ENCODE measurements at regions of chr12 and their contacts with region 1.

Region 1: DNA sequence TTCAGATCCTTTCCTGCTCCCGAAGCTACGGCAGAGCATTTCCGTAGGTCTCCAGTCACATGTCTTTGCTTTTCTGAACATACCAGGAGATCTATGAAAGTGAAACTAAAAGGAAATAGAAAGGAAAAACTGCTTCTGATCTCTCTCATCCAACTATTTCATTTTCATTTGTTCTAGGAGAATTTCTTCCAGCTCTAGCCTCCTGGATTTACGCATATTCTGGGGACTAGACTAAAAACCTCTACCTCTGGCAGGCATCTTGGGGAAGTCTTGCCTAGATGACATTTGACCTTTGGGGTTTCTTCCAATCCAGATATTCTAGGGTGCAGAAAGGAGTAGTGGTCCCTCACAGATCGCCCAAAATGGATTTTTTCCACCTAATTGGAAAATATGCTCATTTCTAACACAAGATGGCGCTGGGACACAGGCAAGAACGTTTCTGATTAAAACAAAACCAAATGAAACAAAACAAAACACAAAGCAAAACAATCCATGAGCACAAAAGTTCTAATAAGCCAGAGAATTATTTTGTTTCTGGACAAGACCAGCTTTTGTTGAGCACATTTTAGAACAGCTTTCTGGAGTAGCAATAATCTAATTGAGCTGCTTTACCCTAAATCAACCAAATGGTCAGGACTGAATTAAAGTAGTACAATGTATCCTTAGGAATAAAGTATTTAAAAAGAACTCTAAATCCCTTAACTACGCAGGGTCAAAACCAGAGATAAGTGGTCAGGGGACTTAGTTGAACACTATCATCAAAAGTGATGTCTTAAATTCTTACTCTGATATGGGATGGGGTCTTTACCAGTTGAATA is 12.3 kb upstream of the PARP11 start:
- DNase-seq: no peak
- ATAC-seq: peak; percentile 42
- H3K4me3 Mint-ChIP-seq: no peak overlapping the region
- H3K27ac Mint-ChIP-seq: no peak overlapping the region
- H3K4me1 Mint-ChIP-seq: peaks cover 4% of the 10 kb centered on the region
- H3K27me3 Mint-ChIP-seq: peaks cover 10% of the 10 kb centered on the region
- CTCF ChIP-seq: peak; percentile 26

Region 2: DNA sequence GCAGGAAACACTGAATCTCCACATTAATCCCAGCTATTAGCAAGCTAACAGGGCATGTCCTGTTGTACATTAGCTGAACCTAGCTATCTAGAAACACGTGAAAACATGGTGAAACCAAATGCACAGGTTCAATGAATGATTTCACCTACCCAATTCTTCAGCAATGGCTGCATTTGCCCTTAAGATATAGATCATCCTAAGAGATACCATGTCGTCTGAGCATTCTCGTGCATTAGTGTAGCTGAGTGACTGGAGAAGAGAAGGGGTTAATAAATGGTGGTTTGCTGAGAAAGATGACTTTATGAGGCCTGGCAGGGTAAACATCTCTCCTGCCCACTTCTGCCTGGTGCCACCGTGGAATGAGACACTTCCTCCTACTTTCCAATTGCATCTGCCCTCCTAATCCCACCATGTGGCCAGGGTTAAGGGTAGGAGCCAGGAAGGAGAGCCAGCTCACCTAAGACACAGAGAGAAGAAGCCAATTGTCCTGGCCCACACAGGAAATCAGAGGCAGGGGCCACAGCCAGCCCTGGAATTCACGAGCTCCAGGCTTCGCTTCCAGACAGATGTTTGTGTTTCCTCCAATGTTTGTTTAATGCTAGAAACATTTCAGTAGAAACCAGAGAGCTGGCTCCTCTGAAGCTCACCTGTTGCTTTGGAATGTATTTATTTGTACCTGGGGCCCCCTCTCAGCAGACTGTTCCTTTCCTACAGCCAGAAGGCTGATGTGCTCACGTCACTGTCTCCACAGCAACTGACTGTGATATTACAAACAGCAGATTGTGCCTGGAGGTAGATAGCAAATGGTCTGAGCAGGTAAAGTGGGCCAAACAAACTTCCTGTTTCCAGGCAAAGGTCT is 113.7 kb after region 1 on chr12:
- CTCF ChIA-PET with region 1: interaction called, 15 read pairs
- POLR2A ChIA-PET with region 1: interaction called, 3 read pairs
- intact Hi-C with region 1: loop called (anchors 2 kb)
- DNase-seq: no peak
- ATAC-seq: no peak
- H3K4me3 Mint-ChIP-seq: no peak overlapping the region
- H3K27ac Mint-ChIP-seq: no peak overlapping the region
- H3K4me1 Mint-ChIP-seq: peaks cover 4% of the 10 kb centered on the region
- H3K27me3 Mint-ChIP-seq: peaks cover 6% of the 10 kb centered on the region
- CTCF ChIP-seq: no peak

Region 3: DNA sequence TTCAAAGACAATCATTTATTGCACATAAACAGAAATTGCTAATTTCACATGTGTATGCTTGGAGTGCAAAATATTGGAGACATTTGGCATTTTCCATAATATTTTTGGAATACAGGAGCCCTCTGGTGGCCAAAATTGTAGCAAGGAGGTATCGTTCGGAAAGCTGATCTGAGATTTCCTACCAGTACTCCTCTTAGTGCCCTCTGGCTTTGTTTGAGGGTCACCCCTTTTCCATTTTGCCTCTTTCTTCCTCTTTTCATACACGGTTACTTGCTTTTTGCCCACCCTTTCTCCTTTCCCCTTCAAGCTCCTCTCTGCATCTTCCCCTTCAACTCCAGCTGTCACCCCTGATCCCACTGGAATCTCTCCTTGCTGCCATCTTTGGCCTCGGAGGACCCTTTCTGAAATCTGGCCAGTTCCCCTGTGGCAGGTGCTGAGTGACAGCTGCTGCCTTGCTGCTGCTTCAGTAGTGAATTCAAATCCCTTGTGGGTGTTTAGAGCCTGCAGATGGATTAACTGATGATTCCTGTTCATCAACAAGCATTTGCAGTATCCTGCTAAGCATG is 152.3 kb after region 1 on chr12:
- CTCF ChIA-PET with region 1: interaction called, 6 read pairs
- POLR2A ChIA-PET with region 1: no interaction called
- intact Hi-C with region 1: loop called (anchors 5 kb)
- DNase-seq: no peak
- ATAC-seq: no peak
- H3K4me3 Mint-ChIP-seq: no peak overlapping the region
- H3K27ac Mint-ChIP-seq: no peak overlapping the region
- H3K4me1 Mint-ChIP-seq: no peaks in the 10 kb centered on the region
- H3K27me3 Mint-ChIP-seq: peaks cover 8% of the 10 kb centered on the region
- CTCF ChIP-seq: no peak

Region 4: DNA sequence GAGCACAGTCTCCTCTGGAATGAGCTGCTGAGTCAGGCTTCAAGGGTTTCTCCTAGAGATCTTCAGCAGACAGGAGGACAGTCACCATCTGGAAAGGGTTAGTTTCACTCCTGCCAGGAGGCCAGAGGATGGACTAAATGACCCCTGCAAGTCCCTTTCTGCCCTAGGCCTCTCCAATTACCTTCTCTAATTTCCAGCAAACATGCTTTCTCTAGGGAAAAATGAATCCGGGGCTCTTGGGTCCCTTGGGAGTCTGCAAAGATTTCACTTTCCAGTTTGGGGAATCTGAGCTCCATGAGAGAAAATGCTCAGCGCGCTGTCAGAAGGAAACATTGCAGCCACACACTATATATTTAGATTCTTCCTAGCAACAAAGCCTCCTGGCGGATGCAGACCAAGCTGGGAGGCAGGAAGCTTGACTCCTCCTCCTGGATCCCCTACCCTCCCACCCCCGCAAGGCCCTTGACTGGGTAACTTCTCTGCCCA is 203.7 kb after region 1 on chr12:
- CTCF ChIA-PET with region 1: no interaction called
- POLR2A ChIA-PET with region 1: no interaction called
- intact Hi-C with region 1: no loop called
- DNase-seq: no peak
- ATAC-seq: no peak
- H3K4me3 Mint-ChIP-seq: no peak overlapping the region
- H3K27ac Mint-ChIP-seq: no peak overlapping the region
- H3K4me1 Mint-ChIP-seq: peaks cover 4% of the 10 kb centered on the region
- H3K27me3 Mint-ChIP-seq: peaks cover 8% of the 10 kb centered on the region
- CTCF ChIP-seq: no peak

Region 5: DNA sequence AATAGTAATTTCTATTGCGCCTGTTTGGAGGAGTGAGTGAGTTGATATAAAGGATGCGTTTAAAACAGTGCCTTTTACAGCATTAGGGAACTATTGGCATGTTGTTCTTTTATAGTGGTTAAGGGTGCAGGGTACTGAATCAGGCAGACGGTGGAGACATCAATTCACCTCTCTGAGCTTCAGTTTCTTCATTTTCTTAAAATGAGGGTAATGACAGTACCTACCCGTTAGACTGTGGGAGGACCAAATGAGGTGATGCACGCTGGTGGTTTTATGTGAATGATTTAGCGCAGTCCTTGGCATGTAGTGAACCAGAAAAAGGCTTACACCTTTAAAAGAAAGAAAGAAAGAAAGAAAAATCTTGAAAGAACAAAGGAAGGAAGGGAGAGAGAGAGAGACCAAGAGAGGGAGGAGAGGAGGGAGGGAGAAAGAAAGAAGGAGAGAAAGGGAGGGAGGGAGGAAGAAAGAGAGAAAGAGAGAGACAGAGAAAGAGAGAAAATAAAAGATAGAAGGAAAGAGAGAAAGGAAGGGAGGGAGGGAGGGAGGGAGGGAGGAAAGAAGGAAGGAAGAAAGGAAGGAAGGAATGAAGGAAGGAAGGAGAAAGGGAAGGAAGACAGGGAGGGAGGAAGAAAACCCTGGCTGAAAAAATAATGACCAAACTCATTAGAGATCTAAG is 365.9 kb after region 1 on chr12:
- CTCF ChIA-PET with region 1: no interaction called
- POLR2A ChIA-PET with region 1: no interaction called
- intact Hi-C with region 1: no loop called
- DNase-seq: no peak
- ATAC-seq: no peak
- H3K4me3 Mint-ChIP-seq: no peak overlapping the region
- H3K27ac Mint-ChIP-seq: no peak overlapping the region
- H3K4me1 Mint-ChIP-seq: peaks cover under 1% of the 10 kb centered on the region
- H3K27me3 Mint-ChIP-seq: peaks cover 4% of the 10 kb centered on the region
- CTCF ChIP-seq: no peak

Region 6: GRCh38 chr12:4421590-4422031 is 536.1 kb after region 1 on chr12:
- CTCF ChIA-PET with region 1: interaction called, 9 read pairs
- POLR2A ChIA-PET with region 1: no interaction called
- intact Hi-C with region 1: loop called (anchors 1 kb)
- DNase-seq: no peak
- ATAC-seq: peak; percentile 31
- H3K4me3 Mint-ChIP-seq: no peak overlapping the region
- H3K27ac Mint-ChIP-seq: no peak overlapping the region
- H3K4me1 Mint-ChIP-seq: no peaks in the 10 kb centered on the region
- H3K27me3 Mint-ChIP-seq: peaks cover 5% of the 10 kb centered on the region
- CTCF ChIP-seq: no peak

Region 7: GRCh38 chr12:4526923-4527546 is 641.5 kb after region 1 on chr12:
- CTCF ChIA-PET with region 1: interaction called, 7 read pairs
- POLR2A ChIA-PET with region 1: no interaction called
- intact Hi-C with region 1: loop called (anchors 1 kb)
- DNase-seq: no peak
- ATAC-seq: no peak
- H3K4me3 Mint-ChIP-seq: no peak overlapping the region
- H3K27ac Mint-ChIP-seq: no peak overlapping the region
- H3K4me1 Mint-ChIP-seq: no peaks in the 10 kb centered on the region
- H3K27me3 Mint-ChIP-seq: no peaks in the 10 kb centered on the region
- CTCF ChIP-seq: peak; percentile 97

Region 8: DNA sequence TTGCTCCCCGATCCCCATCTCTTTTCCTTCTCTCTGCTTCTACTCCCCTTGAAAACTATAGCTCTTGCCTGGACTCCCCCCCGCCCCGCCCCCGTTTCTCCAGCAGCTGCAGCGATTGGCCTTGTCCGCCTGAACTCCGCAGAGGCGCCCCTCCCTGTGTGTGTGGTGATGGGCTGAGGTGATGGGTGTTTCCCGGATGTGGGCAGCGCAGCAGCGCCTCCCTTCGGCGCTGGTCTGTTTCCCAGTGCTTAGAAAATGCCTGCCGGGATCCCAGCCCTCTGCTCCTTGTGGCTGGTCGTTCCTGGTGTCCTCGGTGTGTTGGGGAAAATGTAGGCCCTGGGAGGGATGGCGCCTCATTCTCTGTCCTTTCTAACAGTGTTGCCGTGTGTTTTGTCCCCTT is 878.1 kb after region 1 on chr12:
- CTCF ChIA-PET with region 1: interaction called, 13 read pairs
- POLR2A ChIA-PET with region 1: no interaction called
- intact Hi-C with region 1: no loop called
- DNase-seq: no peak
- ATAC-seq: no peak
- H3K4me3 Mint-ChIP-seq: no peak overlapping the region
- H3K27ac Mint-ChIP-seq: no peak overlapping the region
- H3K4me1 Mint-ChIP-seq: peaks cover 2% of the 10 kb centered on the region
- H3K27me3 Mint-ChIP-seq: no peaks in the 10 kb centered on the region
- CTCF ChIP-seq: no peak